ENCODE measurements at regions of chr7 and their contacts with region 1.

Region 1: DNA sequence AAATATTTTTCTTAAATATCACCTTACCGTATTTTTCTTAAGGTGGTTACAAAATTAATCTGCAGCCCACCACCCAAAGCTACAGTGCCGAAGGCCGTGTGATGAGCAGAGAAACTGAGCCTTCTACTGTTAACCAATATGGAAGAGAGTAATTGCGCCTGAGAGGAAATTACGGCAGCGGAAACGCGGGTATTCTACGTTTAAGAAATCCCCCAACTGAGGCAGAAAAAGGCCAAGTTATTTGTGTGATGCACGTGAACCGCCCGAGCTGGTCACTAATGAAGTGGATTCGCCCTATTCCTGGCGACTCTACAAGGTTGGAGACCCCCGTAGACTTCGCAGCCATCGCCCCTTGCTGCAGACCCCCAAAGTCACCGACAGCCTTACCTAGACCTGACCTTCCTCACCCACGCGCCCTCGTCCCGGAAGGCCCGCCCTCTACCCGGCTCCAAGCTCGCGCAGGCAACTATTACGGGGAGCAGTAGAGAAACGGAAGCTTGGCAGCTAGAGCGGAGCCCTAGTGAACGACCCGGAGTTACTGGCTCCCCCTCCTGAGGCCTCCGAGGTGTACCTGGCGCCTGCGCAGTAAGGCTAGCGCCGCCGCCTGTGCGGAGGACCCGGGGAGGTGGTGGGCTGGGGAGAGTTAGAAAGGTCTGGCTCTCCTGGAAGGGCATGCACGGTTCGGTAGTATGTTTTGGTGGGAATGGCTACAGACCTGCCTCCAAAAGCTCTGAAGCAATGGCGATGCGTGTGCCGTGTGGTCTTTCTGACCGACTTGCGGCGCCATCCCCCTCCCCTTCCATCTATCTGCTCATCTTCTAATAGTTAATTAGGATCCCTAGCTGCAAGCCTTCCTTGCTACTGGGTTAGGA is at the start of gene MRPS33:
- DNase-seq: peak; percentile 96
- H3K4me3 Mint-ChIP-seq: peak within 1 kb of the TSS; percentile 94
- H3K27ac Mint-ChIP-seq: peak within 1 kb of the TSS; percentile 98
- H3K4me1 Mint-ChIP-seq: peaks cover 38% of the 10 kb centered on the region
- H3K27me3 Mint-ChIP-seq: peaks cover 21% of the 10 kb centered on the region
- total RNA-seq, gene MRPS33: 69.1 to 72.6 TPM

Region 2: DNA sequence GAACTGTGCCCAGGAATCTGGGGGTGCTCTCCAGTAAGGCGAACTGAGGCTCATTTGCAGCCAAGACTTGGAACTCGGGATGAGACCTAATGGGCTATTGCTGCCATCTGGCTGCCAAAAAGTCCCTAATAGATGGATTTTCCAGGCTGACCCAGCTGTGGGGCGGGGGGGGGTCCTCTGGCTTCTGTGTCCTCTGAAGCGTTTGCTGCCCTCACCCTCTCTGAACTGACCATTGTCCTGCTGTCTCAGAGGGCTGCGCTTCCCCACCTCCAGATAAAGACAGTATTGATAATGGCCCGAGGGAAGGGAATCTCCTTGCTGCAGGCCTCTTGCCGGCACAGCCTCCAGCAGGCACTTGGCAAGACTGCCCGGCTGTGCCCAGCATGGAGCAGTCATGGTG is 1444.6 kb before region 1 on chr7:
- CTCF ChIA-PET with region 1: no interaction called
- POLR2A ChIA-PET with region 1: no interaction called
- DNase-seq: no peak
- H3K4me3 Mint-ChIP-seq: no peak overlapping the region
- H3K27ac Mint-ChIP-seq: no peak overlapping the region
- H3K4me1 Mint-ChIP-seq: peaks cover 8% of the 10 kb centered on the region
- H3K27me3 Mint-ChIP-seq: no peaks in the 10 kb centered on the region

Region 3: DNA sequence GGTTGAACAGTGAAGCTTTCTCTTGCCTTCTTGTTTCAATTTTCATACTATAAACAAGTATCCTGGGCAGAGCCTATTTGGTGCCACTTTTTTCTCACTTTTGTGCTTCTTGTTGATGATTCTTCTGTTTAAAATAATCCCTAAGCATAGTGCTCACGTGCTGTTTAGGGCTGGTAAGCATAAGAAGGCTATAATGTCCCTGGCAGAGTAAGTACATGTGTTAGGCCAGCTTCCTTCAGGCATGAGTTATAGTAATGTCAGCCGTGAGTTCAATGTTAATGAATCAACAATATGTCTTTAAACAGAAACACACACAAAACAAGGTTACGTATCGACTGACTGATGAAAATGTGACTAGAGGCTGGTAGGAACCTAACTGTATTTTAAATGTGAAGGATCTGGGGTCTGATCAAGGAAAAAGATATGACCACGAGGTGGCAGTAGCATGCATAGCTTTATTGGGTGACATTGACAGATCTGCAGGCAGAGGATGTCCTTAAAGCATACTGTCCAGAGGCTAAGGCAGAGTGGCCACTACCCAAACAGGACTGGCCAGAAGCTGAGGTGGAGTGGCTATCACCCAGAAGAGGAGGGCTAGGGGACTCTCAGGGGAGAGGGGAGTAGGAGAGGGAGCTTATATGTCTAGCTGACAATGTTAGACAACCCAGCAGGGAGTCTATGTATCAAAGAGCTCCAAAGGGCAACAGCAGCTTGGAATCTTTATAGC is 203.8 kb before region 1 on chr7:
- CTCF ChIA-PET with region 1: interaction called, 11 read pairs
- POLR2A ChIA-PET with region 1: no interaction called
- DNase-seq: peak; percentile 78
- H3K4me3 Mint-ChIP-seq: no peak overlapping the region
- H3K27ac Mint-ChIP-seq: no peak overlapping the region
- H3K4me1 Mint-ChIP-seq: no peaks in the 10 kb centered on the region
- H3K27me3 Mint-ChIP-seq: no peaks in the 10 kb centered on the region

Region 4: DNA sequence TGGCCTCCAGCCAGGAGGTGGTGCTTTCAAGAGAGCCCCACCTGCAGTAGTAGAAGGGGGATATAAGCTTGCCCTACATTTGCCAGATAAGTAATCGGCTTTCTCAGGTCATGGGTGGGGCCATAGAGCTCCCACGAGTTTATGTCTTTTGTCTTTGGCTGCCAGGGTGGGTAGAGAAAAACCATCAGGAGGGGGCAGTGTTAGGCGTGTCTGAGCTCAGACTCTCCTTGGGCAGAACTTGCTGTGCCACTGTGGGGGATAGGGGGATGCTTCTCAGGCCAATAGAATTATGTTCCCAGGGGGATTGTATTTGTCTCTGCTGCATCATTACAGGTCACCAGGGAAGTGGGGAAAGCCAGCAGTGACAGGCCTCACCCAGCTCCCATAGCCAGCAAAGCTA is 12.3 kb after region 1 on chr7:
- CTCF ChIA-PET with region 1: interaction called, 14 read pairs
- POLR2A ChIA-PET with region 1: no interaction called
- DNase-seq: no peak
- H3K4me3 Mint-ChIP-seq: no peak overlapping the region
- H3K27ac Mint-ChIP-seq: no peak overlapping the region
- H3K4me1 Mint-ChIP-seq: peaks cover 25% of the 10 kb centered on the region
- H3K27me3 Mint-ChIP-seq: peaks cover 32% of the 10 kb centered on the region

Measured in activated CD4-positive, alpha-beta T cell treated with anti-CD3 and anti-CD28 coated beads, Interleukin-2, amount 10 ng/mL, durations not matched to agents 7 days and 5 days (primary cell).